ENCODE measurements at regions of chr21 and their contacts with region 1.

Region 1: DNA sequence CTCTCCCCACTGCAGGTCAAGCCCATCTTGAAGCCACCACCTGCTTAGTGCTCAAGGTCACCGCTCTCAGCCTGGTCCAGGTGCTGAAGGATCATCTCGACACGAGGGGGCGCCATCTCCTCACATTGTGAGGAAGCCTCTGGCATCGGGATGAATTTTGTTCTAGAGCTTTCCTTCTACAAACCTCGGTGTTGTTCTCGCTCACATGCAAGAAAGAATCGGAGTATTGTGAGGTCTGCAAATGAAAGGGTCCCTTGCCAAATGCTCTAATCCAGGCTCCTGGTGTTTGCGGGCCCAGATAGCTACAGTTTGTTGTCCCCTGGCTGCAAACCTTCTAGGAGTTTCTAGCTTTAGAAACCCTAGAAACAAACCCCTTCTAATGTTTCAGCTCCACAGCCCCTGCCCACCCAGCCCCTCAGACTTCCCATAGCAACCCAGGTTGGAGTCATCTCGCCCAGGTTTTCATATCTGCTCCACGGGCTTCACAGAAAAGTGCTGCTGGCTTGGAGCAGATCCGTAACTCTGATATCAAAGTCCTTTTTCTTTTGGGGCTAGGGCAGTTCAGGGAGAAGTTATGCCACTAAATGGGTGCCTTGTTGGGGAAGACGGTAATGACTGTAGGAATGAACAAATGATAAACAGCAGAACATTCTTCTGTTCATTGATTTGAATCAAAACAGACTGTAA is 8.6 kb upstream of the ATP5PO start:
- DNase-seq: peak; percentile 89
- H3K4me3 Mint-ChIP-seq: no peak overlapping the region
- H3K27ac Mint-ChIP-seq: peak overlapping the region; percentile 53
- H3K4me1 Mint-ChIP-seq: peaks cover 6% of the 10 kb centered on the region
- H3K27me3 Mint-ChIP-seq: no peaks in the 10 kb centered on the region
- CTCF ChIP-seq: peak; percentile 87

Region 2: DNA sequence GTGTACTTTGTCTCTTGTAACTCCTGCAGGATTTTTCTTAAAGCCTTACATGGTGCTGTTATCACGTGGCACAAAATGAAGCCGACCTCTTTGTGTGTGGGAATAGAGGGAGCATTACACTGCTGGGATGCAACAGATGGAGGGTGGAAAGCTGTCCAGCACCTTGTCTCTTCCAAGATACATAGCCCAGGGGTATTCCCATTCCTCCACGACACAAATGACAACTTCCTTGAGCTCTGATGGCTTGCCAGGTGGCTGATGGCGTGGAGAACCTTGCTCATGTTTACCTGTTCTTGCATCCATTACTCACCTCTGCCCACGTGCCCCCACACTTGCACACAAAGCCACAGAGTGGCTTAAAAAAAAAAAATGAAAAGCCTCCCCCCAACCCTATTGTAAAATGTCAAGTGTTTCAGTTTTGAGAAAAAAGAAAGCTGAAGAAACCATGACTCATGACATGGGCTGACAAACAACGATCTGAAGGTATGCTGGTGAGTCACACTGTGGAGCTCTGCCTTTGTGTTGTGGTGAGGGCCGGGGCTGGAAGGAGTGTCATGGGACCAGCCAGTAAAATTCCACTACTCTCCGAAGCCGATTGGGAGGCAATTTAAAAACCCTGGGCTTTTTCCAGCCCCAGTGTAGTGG is 23.4 kb after region 1 on chr21:
- CTCF ChIA-PET with region 1: interaction called, 42 read pairs
- POLR2A ChIA-PET with region 1: interaction called, 9 read pairs
- intact Hi-C with region 1: no loop called
- DNase-seq: peak; percentile 98
- H3K4me3 Mint-ChIP-seq: peak overlapping the region; percentile 74
- H3K27ac Mint-ChIP-seq: peak overlapping the region; percentile 96
- H3K4me1 Mint-ChIP-seq: peaks cover 36% of the 10 kb centered on the region
- H3K27me3 Mint-ChIP-seq: no peaks in the 10 kb centered on the region
- CTCF ChIP-seq: no peak

Region 3: DNA sequence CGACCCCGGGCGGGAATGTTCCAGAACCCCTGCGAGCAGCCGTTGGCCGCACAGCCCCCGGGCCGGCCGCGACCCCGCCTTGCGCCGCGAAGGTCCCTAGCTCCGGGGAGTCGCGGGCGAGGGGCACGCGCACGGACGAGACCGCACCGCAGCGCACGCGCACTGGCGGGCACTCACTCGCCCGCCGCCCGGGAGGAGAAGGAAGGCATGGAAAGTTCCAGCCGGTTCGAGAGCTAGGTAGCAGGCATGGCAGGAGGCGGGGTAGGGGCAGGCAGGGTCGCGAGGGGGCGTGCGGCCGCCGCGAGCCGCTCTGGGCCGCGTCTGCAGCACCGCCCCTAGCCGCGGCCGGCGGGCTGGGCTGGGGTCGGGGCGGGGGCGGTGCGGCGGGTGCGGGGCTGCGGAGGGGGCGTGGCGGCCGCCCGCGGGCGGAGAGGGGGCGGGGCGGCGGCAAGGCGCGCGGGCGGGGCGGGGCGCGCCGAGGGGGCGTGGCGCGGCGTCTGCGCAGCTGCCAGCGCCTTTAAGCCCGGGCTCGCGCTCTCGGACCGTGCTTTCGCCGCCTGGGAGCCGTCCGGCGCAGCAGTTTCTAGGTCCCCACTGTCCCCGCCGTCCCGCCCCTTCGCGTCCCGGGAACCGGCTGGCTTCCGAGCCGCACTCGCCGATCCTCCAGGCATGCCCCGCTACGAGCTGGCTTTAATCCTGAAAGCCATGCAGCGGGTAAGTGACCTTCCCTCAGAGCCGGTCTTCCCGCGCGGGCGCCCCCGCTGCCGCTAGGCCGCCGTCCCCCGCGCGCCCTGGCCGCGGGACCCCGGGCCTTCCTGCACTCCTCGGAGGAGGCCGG is 149.0 kb after region 1 on chr21 and contains the starts of genes MRPS6 and SLC5A3:
- CTCF ChIA-PET with region 1: interaction called, 31 read pairs
- POLR2A ChIA-PET with region 1: interaction called, 27 read pairs
- intact Hi-C with region 1: loop called (anchors 2 kb)
- DNase-seq: peak; percentile 75
- H3K4me3 Mint-ChIP-seq: peak within 1 kb of the TSS; percentile 91
- H3K27ac Mint-ChIP-seq: peak within 1 kb of the TSS; percentile 93
- H3K4me1 Mint-ChIP-seq: peaks cover 36% of the 10 kb centered on the region
- H3K27me3 Mint-ChIP-seq: no peaks in the 10 kb centered on the region
- CTCF ChIP-seq: no peak
- total RNA-seq, gene MRPS6: 86.0 and 90.7 TPM in 2 replicates
- total RNA-seq, gene SLC5A3: 8.1 and 8.5 TPM in 2 replicates

Region 4: GRCh38 chr21:34202553-34203372 is 278.5 kb after region 1 on chr21:
- CTCF ChIA-PET with region 1: interaction called, 34 read pairs
- POLR2A ChIA-PET with region 1: no interaction called
- intact Hi-C with region 1: loop called (anchors 2 kb)
- DNase-seq: no peak
- H3K4me3 Mint-ChIP-seq: no peak overlapping the region
- H3K27ac Mint-ChIP-seq: no peak overlapping the region
- H3K4me1 Mint-ChIP-seq: peaks cover 5% of the 10 kb centered on the region
- H3K27me3 Mint-ChIP-seq: no peaks in the 10 kb centered on the region
- CTCF ChIP-seq: no peak

Region 5: DNA sequence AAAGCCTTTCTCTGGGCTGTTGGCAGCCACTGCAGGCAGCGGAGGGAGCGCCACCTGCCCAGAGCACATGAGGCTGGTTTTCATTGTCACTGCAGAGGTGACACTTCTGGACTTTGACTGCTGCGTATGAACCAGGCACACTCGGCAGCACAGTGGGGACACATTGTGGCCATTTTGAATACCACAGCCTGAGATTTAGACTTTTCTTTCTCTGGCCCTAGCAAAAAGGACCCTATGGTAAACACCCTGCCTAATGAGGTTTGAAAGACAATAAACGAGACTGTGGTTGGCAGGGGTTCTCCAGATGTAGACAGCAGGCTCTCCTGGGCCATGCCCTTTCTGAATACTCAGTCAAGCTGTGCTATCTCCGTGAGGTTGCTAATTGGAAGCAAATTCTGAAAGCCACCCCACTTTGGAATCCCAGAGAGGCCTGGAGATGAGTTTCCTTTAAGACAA is 427.6 kb after region 1 on chr21:
- CTCF ChIA-PET with region 1: interaction called, 237 read pairs
- POLR2A ChIA-PET with region 1: interaction called, 21 read pairs
- intact Hi-C with region 1: loop called (anchors 2 kb)
- DNase-seq: peak; percentile 26
- H3K4me3 Mint-ChIP-seq: no peak overlapping the region
- H3K27ac Mint-ChIP-seq: no peak overlapping the region
- H3K4me1 Mint-ChIP-seq: no peaks in the 10 kb centered on the region
- H3K27me3 Mint-ChIP-seq: peaks cover 34% of the 10 kb centered on the region
- CTCF ChIP-seq: peak; percentile 32

Region 6: GRCh38 chr21:34653522-34653921 is 729.3 kb after region 1 on chr21:
- CTCF ChIA-PET with region 1: no interaction called
- POLR2A ChIA-PET with region 1: no interaction called
- intact Hi-C with region 1: no loop called
- DNase-seq: no peak
- H3K4me3 Mint-ChIP-seq: no peak overlapping the region
- H3K27ac Mint-ChIP-seq: no peak overlapping the region
- H3K4me1 Mint-ChIP-seq: no peaks in the 10 kb centered on the region
- H3K27me3 Mint-ChIP-seq: peaks cover 90% of the 10 kb centered on the region
- CTCF ChIP-seq: no peak